H1 (cell line): ENCODE measurements at regions of chr6 and their contacts with region 1.

Region 1: GRCh38 chr6:110039364-110039980 is 61.4 kb downstream of the GPR6 start:
- DNase-seq: peak; percentile 84 to 86
- H3K4me3 ChIP-seq: peak overlapping the region; percentile 13 to 44 (median 26); a peak in 6 of 8 replicates
- H3K27ac ChIP-seq: no peak overlapping the region
- H3K4me1 ChIP-seq: peaks cover 0 to 3% (median 3%) of the 10 kb centered on the region in 4 experiments; a peak in 5 of 7 replicates
- H3K27me3 ChIP-seq: no peaks in the 10 kb centered on the region
- CTCF ChIP-seq: peak; percentile 79 to 94 (median 86)
- EP300 ChIP-seq: no peak
- POLR2A ChIP-seq: no peak
- RAD21 ChIP-seq: peak; percentile 94 to 96

Region 2: GRCh38 chr6:109705258-109705657 is 334.2 kb before region 1 on chr6:
- CTCF ChIA-PET with region 1: interaction called, 129 read pairs
- POLR2A ChIA-PET with region 1: interaction called, 3 read pairs
- DNase-seq: peak; percentile 75 to 83
- H3K4me3 ChIP-seq: no peak overlapping the region
- H3K27ac ChIP-seq: no peak overlapping the region
- H3K4me1 ChIP-seq: peaks cover 0 to 5% (median 3%) of the 10 kb centered on the region in 4 experiments; a peak in 5 of 7 replicates
- H3K27me3 ChIP-seq: no peaks in the 10 kb centered on the region
- CTCF ChIP-seq: peak; percentile 88 to 99 (median 98)
- EP300 ChIP-seq: no peak
- POLR2A ChIP-seq: no peak
- RAD21 ChIP-seq: peak; percentile 99 to 100

Region 3: DNA sequence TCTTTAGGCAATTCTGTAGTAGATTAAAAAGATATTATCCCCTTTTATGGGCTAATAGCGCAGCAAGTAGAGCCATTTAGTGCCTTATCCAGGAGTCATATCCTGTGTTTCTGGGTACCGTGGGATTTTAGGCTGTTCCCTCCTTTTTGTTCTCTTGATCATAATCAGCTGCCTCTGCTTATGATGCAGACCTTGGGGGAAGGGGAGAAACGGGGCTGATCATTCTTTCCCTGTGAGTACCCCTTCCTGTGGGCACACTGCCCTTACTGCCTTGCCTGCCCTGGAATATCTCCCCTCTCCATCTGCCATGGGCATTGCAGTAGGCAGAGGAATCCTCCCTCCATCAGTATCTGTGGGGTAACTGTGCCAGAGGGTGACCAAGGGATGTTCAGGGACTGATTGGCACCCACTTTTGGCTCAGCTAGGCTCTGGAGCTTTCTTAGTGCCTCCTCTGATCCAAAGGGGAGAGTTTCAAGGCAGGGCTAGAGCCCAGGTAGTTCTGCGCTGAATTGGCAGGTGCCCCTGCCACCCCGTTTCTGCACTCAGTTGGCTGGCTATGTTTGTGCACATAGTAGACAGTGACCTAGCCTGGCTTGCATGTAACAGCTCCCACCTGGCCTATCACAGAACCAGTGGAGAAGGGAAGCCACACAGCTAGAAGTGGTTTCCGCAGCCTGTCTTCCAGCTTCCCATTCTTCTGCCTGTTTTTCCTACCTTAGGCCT is 245.1 kb before region 1 on chr6:
- CTCF ChIA-PET with region 1: interaction called, 16 read pairs
- POLR2A ChIA-PET with region 1: no interaction called
- DNase-seq: no peak
- H3K4me3 ChIP-seq: no peak overlapping the region
- H3K27ac ChIP-seq: no peak overlapping the region
- H3K4me1 ChIP-seq: peaks cover 0 to 7% (median 3%) of the 10 kb centered on the region in 4 experiments; a peak in 4 of 7 replicates
- H3K27me3 ChIP-seq: no peaks in the 10 kb centered on the region
- CTCF ChIP-seq: no peak
- EP300 ChIP-seq: no peak
- POLR2A ChIP-seq: no peak
- RAD21 ChIP-seq: no peak

Region 4: DNA sequence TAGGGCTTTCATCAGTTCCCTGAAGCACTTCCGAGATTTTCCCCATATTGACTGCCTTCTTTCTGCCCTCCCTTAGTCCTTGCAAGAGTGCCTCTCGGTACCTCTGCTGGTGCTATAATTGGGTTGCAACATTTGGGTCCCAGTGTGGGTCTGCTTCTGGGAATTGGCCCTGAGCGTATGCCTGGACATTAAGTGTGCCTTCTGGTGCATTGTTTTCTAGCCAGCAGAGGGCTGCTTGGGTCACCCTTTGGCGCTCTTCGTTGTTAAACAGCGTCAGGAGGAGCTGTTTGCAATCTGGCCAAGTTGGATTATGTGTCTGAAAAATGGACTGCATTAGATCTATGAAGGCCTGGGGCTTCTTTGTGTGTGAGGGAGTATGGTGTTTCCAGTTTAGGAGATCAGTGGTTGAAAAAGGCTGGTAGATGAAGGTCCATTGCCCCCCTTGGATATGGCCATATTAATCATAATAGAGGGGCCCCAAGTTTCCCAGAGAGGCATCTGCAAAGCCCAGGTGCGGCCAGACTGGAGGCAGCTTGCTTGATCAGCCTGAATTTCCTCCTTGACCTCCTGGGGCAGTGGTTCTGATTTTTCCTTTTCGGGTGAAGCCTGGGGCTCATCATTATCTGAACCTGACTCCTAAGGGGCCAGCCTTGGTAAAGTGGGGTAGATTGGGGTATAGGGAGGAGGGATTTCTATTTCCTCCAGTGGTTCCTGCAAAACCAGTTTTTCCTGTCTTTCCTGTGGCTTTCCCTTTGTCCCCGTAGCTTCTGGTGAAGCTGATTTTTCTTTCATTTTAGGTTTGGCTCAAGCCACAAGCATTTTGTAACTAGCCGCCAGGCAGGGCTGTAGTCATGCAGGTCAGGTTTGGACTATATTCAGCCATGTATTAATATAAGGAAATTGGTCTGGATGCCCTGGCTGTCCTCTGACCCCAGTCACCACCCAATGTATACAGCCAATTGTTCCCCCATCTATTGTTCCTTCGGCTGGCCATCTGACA is 146.7 kb before region 1 on chr6:
- CTCF ChIA-PET with region 1: interaction called, 12 read pairs
- POLR2A ChIA-PET with region 1: no interaction called
- DNase-seq: peak in 1 of 2 experiments; percentile 56
- H3K4me3 ChIP-seq: peak overlapping the region in 2 of 4 experiments; percentile 10 to 28; a peak in 2 of 8 replicates
- H3K27ac ChIP-seq: 0 out of 2 replicates have a peak overlapping the region, but pooled peaks have one; percentile 12
- H3K4me1 ChIP-seq: peaks cover 0 to 15% (median 9%) of the 10 kb centered on the region in 4 experiments; a peak in 4 of 7 replicates
- H3K27me3 ChIP-seq: no peaks in the 10 kb centered on the region
- CTCF ChIP-seq: peak in 2 of 3 experiments; percentile 3 to 32; a peak in 2 of 4 replicates
- EP300 ChIP-seq: peak in 1 of 2 experiments; percentile 88; a peak in 1 of 3 replicates
- POLR2A ChIP-seq: no peak
- RAD21 ChIP-seq: peak in 1 of 2 experiments; percentile 28; a peak in 2 of 4 replicates

Region 5: DNA sequence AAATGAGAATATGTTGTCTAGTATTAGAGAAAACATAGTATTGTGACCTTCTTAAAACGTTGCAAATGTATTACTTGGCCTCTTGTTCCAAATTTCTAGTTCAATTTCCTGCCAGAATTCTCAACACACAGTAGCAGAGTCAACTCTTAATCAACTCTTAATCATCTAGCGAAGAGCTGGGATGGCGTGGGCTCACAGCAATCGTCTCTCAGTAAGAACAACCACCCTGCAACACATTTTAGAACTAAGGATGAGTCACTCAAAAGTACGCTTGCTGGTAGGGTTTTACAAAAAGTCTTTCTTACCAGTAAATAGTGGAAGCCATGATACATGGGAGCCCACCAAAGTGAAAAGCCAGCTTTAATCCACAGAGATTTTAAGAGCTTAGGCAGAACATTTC is 36.8 kb before region 1 on chr6:
- CTCF ChIA-PET with region 1: interaction called, 16 read pairs
- POLR2A ChIA-PET with region 1: no interaction called
- DNase-seq: no peak
- H3K4me3 ChIP-seq: no peak overlapping the region
- H3K27ac ChIP-seq: no peak overlapping the region
- H3K4me1 ChIP-seq: no peaks in the 10 kb centered on the region
- H3K27me3 ChIP-seq: peaks cover 0 to under 1% (median 0%) of the 10 kb centered on the region in 4 experiments; a peak in 1 of 7 replicates
- CTCF ChIP-seq: no peak
- EP300 ChIP-seq: no peak
- POLR2A ChIP-seq: no peak
- RAD21 ChIP-seq: no peak

Region 6: DNA sequence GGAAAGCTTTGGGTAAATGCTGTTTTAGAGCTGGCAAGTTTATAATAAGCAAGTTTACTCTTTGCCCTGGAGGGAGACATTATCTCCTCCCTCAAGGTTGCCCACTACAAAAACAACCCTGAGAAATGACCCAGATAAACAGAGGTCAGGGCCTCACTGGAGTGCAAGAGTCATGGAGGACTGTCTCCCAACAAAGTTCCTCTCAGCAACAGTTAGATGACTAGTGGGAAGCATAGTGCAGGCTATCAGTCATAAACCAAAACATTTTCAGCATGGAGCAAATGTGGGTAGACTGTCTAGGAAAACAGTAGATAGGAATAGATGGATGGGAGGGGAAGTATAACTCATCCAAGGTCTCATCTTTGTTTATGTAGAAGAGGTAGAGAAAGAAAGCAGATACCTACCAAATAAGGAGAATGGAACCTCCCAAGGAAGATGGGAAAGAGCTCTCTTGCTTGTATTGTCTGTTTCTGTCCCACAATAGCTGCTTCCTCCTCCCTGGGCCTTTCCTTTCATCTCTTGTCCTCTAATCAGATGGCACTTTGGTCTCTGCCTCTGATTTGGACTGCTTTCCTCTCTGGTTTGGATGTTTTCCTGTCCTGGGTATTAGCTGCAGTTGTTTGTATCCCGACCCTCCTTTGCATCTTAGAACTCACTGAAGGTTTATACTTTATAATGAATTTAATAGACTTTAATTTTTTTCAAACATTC is 44.6 kb after region 1 on chr6:
- CTCF ChIA-PET with region 1: no interaction called
- POLR2A ChIA-PET with region 1: no interaction called
- DNase-seq: no peak
- H3K4me3 ChIP-seq: no peak overlapping the region
- H3K27ac ChIP-seq: 0 out of 2 replicates have a peak overlapping the region, but pooled peaks have one; percentile 1
- H3K4me1 ChIP-seq: no peaks in the 10 kb centered on the region
- H3K27me3 ChIP-seq: no peaks in the 10 kb centered on the region
- CTCF ChIP-seq: no peak
- EP300 ChIP-seq: no peak
- POLR2A ChIP-seq: no peak
- RAD21 ChIP-seq: no peak

Region 7: GRCh38 chr6:110389689-110390382 is 350.4 kb after region 1 on chr6:
- CTCF ChIA-PET with region 1: interaction called, 74 read pairs
- POLR2A ChIA-PET with region 1: interaction called, 3 read pairs
- DNase-seq: no peak
- H3K4me3 ChIP-seq: no peak overlapping the region
- H3K27ac ChIP-seq: no peak overlapping the region
- H3K4me1 ChIP-seq: peaks cover 0 to 1% (median 0%) of the 10 kb centered on the region in 4 experiments; a peak in 1 of 7 replicates
- H3K27me3 ChIP-seq: no peaks in the 10 kb centered on the region
- CTCF ChIP-seq: no peak
- EP300 ChIP-seq: no peak
- POLR2A ChIP-seq: no peak
- RAD21 ChIP-seq: no peak